ENCODE measurements at regions of chr1 and their contacts with region 1.

Region 1: DNA sequence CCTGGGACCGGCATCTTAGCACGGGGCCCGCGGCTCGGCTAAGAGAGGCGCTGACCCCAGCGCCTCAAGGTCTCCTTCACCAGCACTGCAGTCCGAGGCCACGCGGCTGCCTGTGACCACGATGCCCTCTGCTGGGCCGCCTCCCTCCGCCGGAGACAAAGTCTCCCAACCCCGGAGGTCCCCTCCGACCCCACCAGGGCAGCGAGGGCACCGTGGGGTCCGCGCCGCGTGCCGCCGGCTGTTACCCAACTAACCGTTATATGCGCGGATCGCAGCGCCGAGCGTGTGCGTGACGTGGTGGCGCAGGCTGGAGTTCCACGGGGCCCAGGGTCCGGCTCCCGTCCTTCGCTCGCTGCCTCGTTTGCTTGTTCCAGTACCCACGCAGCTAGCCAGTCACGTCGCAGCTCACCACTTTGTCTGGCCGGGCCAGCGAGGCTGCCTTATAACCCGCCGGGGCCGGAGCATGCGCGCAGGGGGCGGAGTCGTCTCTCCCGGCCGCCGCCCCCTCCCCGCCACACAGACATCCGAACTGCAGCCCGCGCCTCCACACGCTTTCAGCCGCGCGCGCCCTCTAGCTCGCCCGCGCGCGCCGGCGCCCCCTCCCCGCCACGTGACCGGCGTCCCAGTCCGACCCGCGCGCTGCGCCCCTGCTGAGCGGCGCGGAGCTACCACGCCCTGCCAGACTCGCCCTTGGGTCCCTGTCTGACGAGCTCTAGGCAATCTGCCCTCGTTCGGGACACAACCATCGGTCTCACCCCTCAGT is at the start of gene SLC16A1:
- DNase-seq: peak; percentile 75 to 92
- ATAC-seq: peak; percentile 81 to 92 (median 85)
- H3K4me3 ChIP-seq: peak within 1 kb of the TSS; percentile 97
- H3K4me3 Mint-ChIP-seq: peak within 1 kb of the TSS; percentile 97
- H3K27ac ChIP-seq: peak within 1 kb of the TSS; percentile 87
- H3K27ac Mint-ChIP-seq: peak within 1 kb of the TSS; percentile 3 to 97
- H3K4me1 ChIP-seq: peaks cover 25% of the 10 kb centered on the region
- H3K4me1 Mint-ChIP-seq: peaks cover 31 to 38% of the 10 kb centered on the region in 2 donors
- H3K27me3 ChIP-seq: no peaks in the 10 kb centered on the region
- H3K27me3 Mint-ChIP-seq: peaks cover 4 to 6% of the 10 kb centered on the region in 2 donors
- CTCF ChIP-seq: no peak
- total RNA-seq, gene SLC16A1: 8.7 to 18.5 (median 14.0) TPM

Region 2: DNA sequence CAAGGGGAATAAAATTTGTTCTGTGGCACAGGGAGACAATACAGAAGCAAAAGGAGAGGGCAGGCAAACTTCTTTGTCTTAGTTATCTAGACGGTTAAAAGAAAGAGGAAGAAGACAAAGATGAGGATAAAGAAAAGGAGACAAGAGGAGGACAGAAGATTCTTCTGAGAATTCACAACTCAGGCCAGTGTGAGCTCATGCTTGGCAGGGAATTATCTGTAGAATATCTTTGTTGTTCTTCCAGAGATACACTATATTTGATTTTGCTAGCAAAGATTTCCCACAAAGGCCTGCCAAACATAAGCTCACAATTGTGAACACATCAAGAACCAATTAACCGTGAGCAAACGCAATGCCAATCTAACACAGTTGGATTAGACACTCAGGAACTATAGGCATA is 21.4 kb before region 1 on chr1:
- intact Hi-C with region 1: no loop called
- DNase-seq: no peak
- ATAC-seq: no peak
- H3K4me3 ChIP-seq: no peak overlapping the region
- H3K4me3 Mint-ChIP-seq: no peak overlapping the region
- H3K27ac ChIP-seq: no peak overlapping the region
- H3K27ac Mint-ChIP-seq: no peak overlapping the region
- H3K4me1 ChIP-seq: no peaks in the 10 kb centered on the region
- H3K4me1 Mint-ChIP-seq: no peaks in the 10 kb centered on the region
- H3K27me3 ChIP-seq: no peaks in the 10 kb centered on the region
- H3K27me3 Mint-ChIP-seq: no peaks in the 10 kb centered on the region
- CTCF ChIP-seq: no peak

Region 3: GRCh38 chr1:113072757-113073478 is 117.0 kb after region 1 on chr1 and contains the start of gene LRIG2:
- intact Hi-C with region 1: loop called (anchors 10 kb)
- DNase-seq: peak; percentile 95 to 98
- ATAC-seq: peak; percentile 95 to 99 (median 95)
- H3K4me3 ChIP-seq: peak within 1 kb of the TSS; percentile 72
- H3K4me3 Mint-ChIP-seq: peak within 1 kb of the TSS; percentile 97
- H3K27ac ChIP-seq: peak within 1 kb of the TSS; percentile 58
- H3K27ac Mint-ChIP-seq: peak within 1 kb of the TSS; percentile 95 to 99
- H3K4me1 ChIP-seq: peaks cover 10% of the 10 kb centered on the region
- H3K4me1 Mint-ChIP-seq: peaks cover 19 to 36% of the 10 kb centered on the region in 2 donors
- H3K27me3 ChIP-seq: no peaks in the 10 kb centered on the region
- H3K27me3 Mint-ChIP-seq: no peaks in the 10 kb centered on the region
- CTCF ChIP-seq: peak; percentile 88
- total RNA-seq, gene LRIG2: 20.2 to 28.5 (median 23.7) TPM

Region 4: DNA sequence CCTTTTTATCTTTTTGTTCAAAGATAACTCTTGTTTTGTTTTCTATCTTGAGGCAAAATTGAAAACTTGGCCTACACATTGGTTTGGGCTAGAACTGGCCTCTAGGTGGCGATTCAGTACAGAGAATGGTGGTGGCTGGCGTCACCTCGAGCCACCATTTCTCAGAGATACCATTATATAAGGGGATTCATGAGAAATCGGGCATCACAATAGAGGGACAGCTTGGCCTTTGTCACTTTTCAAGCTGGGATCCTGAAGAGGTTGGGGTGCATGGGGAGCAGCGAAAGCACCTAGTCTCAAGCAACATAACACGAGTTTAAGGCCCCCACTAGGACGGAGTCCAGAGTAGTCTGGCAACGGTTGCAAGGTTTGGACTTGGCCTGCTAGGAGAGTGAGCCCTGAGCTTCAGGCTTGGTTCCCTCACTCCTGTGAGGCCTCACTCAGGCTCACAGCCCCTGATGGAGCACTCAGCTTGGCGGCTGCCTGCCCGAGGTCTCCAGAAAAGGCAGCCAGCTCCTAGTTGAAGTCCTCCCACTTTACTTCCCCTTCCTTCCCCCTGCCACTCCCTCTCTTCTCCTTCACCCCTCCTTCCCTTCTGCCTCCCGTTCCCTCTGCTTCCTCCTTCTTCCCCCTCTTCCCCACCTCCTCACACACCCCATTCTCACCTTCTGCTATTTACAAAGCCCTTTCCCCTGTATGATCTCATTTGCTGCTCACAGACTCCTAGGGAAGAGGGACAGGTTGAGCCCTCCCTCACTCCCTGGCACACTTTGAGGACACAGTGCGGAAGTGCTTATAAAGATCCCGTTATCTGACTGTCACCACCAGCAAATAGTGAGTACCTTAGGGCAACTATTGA is 184.9 kb after region 1 on chr1:
- intact Hi-C with region 1: no loop called
- DNase-seq: peak in 1 of 2 donors; percentile 76
- ATAC-seq: peak; percentile 70 to 85 (median 75)
- H3K4me3 ChIP-seq: no peak overlapping the region
- H3K4me3 Mint-ChIP-seq: no peak overlapping the region
- H3K27ac ChIP-seq: no peak overlapping the region
- H3K27ac Mint-ChIP-seq: no peak overlapping the region
- H3K4me1 ChIP-seq: no peaks in the 10 kb centered on the region
- H3K4me1 Mint-ChIP-seq: peaks cover 0 to 9% of the 10 kb centered on the region in 2 donors
- H3K27me3 ChIP-seq: no peaks in the 10 kb centered on the region
- H3K27me3 Mint-ChIP-seq: no peaks in the 10 kb centered on the region
- CTCF ChIP-seq: peak; percentile 66

Region 5: DNA sequence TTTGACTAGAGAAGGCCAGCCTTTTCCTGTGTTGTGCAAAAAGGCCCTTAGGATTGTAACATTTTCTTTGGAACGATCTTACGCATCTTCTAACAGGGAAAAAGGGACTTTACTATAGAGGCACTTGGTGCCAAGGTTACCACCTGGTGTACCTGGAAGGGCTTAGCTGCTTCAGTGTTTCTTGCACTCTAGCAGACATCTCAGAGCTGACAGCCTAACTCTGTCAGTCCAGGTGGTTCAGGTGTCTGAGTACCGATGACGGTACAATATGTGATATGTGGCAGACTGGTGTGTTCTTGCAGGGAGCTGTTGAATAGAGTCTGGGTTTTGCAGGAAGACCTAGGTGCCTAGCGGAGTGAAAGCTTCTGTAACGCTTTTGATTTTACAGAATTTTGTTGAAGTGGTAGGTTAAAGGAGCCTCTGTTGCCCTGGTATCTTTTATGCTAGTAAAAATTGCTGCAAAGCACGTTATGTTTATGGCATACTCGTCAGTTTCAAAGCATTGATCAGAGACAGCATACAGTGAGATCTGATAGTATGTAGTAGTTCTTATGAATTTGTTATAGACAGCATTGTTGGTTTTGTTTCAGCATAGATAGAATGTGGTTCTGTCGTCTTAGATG is 435.8 kb after region 1 on chr1:
- intact Hi-C with region 1: no loop called
- DNase-seq: peak in 1 of 2 donors; percentile 55
- ATAC-seq: no peak
- H3K4me3 ChIP-seq: peak overlapping the region; percentile 45
- H3K4me3 Mint-ChIP-seq: peak overlapping the region; percentile 85
- H3K27ac ChIP-seq: no peak overlapping the region
- H3K27ac Mint-ChIP-seq: no peak overlapping the region
- H3K4me1 ChIP-seq: peaks cover 16% of the 10 kb centered on the region
- H3K4me1 Mint-ChIP-seq: peaks cover 20 to 27% of the 10 kb centered on the region in 2 donors
- H3K27me3 ChIP-seq: peaks cover 34% of the 10 kb centered on the region
- H3K27me3 Mint-ChIP-seq: peaks cover 16 to 49% of the 10 kb centered on the region in 2 donors
- CTCF ChIP-seq: no peak